Activated CD4-positive, alpha-beta memory T cell treated with anti-CD3 and anti-CD28 coated beads for 36 hours (primary cell): ENCODE measurements at regions of chr17 and their contacts with region 1.

Region 1: GRCh38 chr17:1628856-1629646 is 417 bp upstream of the SLC43A2 start:
- DNase-seq: peak; percentile 93
- H3K4me3 Mint-ChIP-seq: peak overlapping the region; percentile 87
- H3K27ac Mint-ChIP-seq: peak overlapping the region; percentile 67
- H3K4me1 Mint-ChIP-seq: peaks cover 11% of the 10 kb centered on the region
- H3K27me3 Mint-ChIP-seq: peaks cover 16% of the 10 kb centered on the region

Region 2: GRCh38 chr17:1298606-1299005 is 330.4 kb before region 1 on chr17:
- CTCF ChIA-PET with region 1: no interaction called
- POLR2A ChIA-PET with region 1: no interaction called
- intact Hi-C with region 1: no loop called
- DNase-seq: peak; percentile 57
- H3K4me3 Mint-ChIP-seq: no peak overlapping the region
- H3K27ac Mint-ChIP-seq: no peak overlapping the region
- H3K4me1 Mint-ChIP-seq: peaks cover 39% of the 10 kb centered on the region
- H3K27me3 Mint-ChIP-seq: peaks cover 4% of the 10 kb centered on the region

Region 3: GRCh38 chr17:1516388-1517161 is 112.5 kb before region 1 on chr17 and contains the start of gene INPP5K:
- CTCF ChIA-PET with region 1: interaction called, 26 read pairs
- POLR2A ChIA-PET with region 1: no interaction called
- intact Hi-C with region 1: loop called (anchors 1 kb)
- DNase-seq: peak; percentile 99
- H3K4me3 Mint-ChIP-seq: peak within 1 kb of the TSS; percentile 86
- H3K27ac Mint-ChIP-seq: peak within 1 kb of the TSS; percentile 66
- H3K4me1 Mint-ChIP-seq: peaks cover 24% of the 10 kb centered on the region
- H3K27me3 Mint-ChIP-seq: no peaks in the 10 kb centered on the region
- total RNA-seq, gene INPP5K: 21.2 to 24.0 TPM

Region 4: GRCh38 chr17:1566545-1567199 is 62.4 kb before region 1 on chr17:
- CTCF ChIA-PET with region 1: interaction called, 16 read pairs
- POLR2A ChIA-PET with region 1: interaction called, 3 read pairs
- intact Hi-C with region 1: loop called (anchors 2 kb)
- DNase-seq: peak; percentile 66
- H3K4me3 Mint-ChIP-seq: peak overlapping the region; percentile 59
- H3K27ac Mint-ChIP-seq: peak overlapping the region; percentile 84
- H3K4me1 Mint-ChIP-seq: peaks cover 24% of the 10 kb centered on the region
- H3K27me3 Mint-ChIP-seq: no peaks in the 10 kb centered on the region

Region 5: DNA sequence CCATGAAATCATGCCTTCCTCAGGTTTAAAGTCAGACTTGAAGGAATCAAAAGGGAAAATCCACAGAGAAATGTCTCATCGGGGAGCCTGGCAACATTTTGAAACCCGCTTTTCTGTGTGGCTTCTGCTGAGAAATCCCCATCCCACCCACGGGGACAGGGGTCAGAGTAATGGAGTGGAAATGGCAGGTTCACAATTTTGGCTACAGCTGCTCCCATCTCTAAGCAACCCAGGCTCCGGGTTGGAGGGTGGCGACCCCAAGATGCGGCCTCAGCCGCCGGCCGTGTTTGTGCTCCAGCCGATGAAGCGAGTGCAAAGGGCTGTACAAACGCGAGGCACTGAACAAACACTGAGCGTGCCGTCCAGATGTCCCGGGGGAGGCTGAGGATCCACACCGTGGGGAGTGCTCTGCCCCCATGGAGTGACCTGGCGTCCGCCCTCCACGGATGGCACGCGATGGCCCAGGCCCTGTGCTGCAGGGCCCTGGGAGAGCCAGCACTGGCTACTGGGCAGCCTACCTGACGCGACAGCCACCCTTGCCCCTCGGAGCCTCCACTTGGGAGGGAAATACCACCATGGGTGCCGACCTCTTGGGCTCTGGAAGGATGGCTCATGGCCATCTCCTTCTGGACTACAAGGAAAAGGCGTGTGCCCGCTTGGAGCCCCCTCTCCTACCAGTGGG is 22.6 kb before region 1 on chr17:
- CTCF ChIA-PET with region 1: interaction called, 25 read pairs
- POLR2A ChIA-PET with region 1: interaction called, 4 read pairs
- intact Hi-C with region 1: loop called (anchors 1 kb)
- DNase-seq: peak; percentile 60
- H3K4me3 Mint-ChIP-seq: no peak overlapping the region
- H3K27ac Mint-ChIP-seq: peak overlapping the region; percentile 92
- H3K4me1 Mint-ChIP-seq: peaks cover 28% of the 10 kb centered on the region
- H3K27me3 Mint-ChIP-seq: no peaks in the 10 kb centered on the region

Region 6: GRCh38 chr17:1639549-1640343 is 10.7 kb after region 1 on chr17:
- CTCF ChIA-PET with region 1: interaction called, 19 read pairs
- POLR2A ChIA-PET with region 1: no interaction called
- intact Hi-C with region 1: no loop called
- DNase-seq: no peak
- H3K4me3 Mint-ChIP-seq: no peak overlapping the region
- H3K27ac Mint-ChIP-seq: no peak overlapping the region
- H3K4me1 Mint-ChIP-seq: peaks cover 9% of the 10 kb centered on the region
- H3K27me3 Mint-ChIP-seq: no peaks in the 10 kb centered on the region

Region 7: DNA sequence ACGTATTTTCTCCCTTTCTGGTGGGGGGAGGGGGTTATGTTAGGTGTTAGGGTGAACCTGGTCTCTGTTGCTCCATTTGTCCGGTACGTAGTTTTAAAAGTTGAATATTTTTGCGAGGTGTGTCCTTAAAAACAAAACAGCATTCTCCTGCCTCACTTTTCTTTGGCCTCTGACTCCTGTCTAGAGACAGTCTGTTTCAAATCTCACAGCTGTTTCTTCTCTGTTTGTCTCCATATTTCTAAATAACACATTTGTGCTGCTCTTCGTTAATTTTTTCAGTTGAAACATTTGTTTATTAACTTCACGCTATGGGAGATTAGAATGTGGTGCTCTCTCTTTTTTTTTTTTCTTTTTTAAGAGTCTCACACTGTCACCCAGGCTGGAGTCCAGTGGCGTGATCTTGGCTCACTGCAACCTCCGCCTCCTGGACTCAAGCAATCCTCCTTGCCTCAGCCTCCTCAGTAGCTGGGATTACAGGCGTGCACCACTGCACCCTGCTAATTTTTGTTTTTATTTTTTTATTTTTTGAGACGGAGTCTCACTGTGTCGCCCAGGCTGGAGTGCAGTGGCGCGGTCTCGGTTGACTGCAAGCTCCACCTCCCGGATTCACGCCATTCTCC is 232.4 kb after region 1 on chr17:
- CTCF ChIA-PET with region 1: no interaction called
- POLR2A ChIA-PET with region 1: no interaction called
- intact Hi-C with region 1: no loop called
- DNase-seq: no peak
- H3K4me3 Mint-ChIP-seq: no peak overlapping the region
- H3K27ac Mint-ChIP-seq: no peak overlapping the region
- H3K4me1 Mint-ChIP-seq: peaks cover 4% of the 10 kb centered on the region
- H3K27me3 Mint-ChIP-seq: no peaks in the 10 kb centered on the region